Ovary (tissue), 10 donors: ENCODE measurements at regions of chr2 and their contacts with region 1.

Region 1: GRCh38 chr2:98835831-98836385 is 100.1 kb downstream of the CRACDL start:
- DNase-seq: no peak
- H3K4me3 ChIP-seq: no peak overlapping the region
- H3K27ac ChIP-seq: no peak overlapping the region
- H3K4me1 ChIP-seq: no peaks in the 10 kb centered on the region
- H3K27me3 ChIP-seq: no peaks in the 10 kb centered on the region
- CTCF ChIP-seq: no peak
- EP300 ChIP-seq: no peak
- POLR2A ChIP-seq: no peak

Region 2: GRCh38 chr2:98649135-98649991 is 186.5 kb before region 1 on chr2:
- intact Hi-C with region 1: loop called in 3 of 4 experiments (anchors 5 kb)
- DNase-seq: peak; percentile 39 to 77 (median 69)
- H3K4me3 ChIP-seq: no peak overlapping the region
- H3K27ac ChIP-seq: no peak overlapping the region
- H3K4me1 ChIP-seq: no peaks in the 10 kb centered on the region
- H3K27me3 ChIP-seq: no peaks in the 10 kb centered on the region
- CTCF ChIP-seq: peak; percentile 77 to 87 (median 84)
- EP300 ChIP-seq: no peak
- POLR2A ChIP-seq: no peak

Region 3: DNA sequence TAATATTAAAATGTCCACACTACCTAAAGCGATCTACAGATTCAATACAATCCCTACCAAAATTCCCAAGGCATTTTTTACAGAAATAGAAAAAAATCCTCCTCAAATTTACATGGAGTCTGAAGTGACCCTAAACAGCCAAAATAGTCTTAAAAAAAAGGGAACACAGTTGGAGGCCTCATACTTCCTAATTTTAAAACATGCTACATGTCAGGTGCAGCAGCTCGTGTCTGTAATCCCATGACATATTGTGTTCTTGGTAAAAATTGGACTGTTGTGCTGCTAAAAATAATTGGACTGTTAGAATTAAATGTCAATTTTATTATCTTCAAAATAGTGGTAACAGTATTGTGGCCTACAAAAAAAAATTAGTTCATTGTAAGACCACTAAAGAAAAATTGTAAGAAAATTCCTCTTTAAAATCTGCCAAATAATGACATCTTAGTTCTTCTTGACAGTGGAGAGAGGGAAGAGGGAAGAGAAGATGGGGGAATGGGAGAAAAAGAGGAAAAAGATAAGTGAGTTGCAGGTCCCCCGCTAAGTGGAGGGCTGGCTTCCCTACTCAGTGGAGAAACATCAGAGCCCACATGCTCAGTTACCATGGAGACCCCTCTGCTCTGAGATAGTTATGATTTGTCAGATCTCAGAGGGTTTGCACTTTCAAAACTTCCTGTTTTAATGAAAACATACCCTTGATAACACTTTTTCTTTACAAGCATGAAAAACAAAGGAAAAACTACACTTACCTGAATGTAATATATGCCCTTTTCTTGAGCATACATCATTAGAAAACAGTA is 181.0 kb before region 1 on chr2:
- intact Hi-C with region 1: loop called in 2 of 4 experiments (anchors 5 kb)
- DNase-seq: no peak
- H3K4me3 ChIP-seq: no peak overlapping the region
- H3K27ac ChIP-seq: no peak overlapping the region
- H3K4me1 ChIP-seq: no peaks in the 10 kb centered on the region
- H3K27me3 ChIP-seq: no peaks in the 10 kb centered on the region
- CTCF ChIP-seq: no peak
- EP300 ChIP-seq: no peak
- POLR2A ChIP-seq: no peak